ENCODE measurements at regions of chr6 and their contacts with region 1.

Region 1: DNA sequence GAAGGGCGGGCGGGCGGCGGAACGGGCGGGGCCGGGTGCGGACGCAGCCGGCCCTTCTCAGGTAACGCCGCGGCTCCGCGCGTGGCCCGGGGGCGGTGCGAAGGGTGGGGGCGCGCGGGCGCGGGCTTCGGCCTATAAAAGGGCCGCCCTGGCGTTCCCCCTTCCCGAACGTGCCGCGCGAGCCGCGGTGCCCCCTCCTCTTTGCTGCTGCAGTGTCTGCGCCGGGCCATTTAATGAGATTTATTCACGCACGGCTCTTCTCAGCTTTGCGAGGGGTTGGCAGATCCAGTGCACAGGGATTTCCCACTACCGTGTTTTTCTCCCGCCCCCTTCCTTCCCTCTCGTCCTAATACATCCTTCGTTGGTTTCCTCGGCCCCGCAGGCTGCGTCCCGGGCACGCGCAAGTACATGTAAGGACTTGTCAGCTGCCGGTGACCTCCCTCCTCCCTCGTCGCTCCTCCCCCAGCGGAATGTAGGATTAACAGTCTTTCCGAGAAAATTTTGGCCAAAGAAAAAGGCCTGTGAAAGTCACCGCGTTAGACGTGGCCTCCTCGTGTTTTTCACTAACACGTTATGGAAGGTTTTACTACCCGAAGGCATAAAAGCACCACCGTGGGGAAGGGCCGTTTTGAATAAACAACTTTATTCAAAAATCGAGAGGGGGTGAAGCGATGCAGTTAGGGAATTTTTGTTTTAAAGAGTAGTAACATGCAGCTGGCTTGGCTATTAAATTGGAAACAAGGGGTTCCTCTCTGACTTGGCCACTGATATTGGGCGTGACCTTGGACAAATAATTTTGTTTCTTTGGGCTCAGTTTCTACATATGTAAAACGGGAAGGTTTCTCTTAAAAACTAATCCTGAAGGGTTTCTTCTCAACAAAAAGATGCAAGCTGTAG is 966 bp upstream of the REV3L start:
- DNase-seq: peak in 6 of 9 donors; percentile 80 to 89 (median 86)
- ATAC-seq: peak; percentile 79
- H3K4me3 ChIP-seq: peak overlapping the region; percentile 93
- H3K4me3 Mint-ChIP-seq: peak overlapping the region; percentile 96 to 100 (median 98)
- H3K27ac ChIP-seq: peak overlapping the region; percentile 99
- H3K27ac Mint-ChIP-seq: peak overlapping the region; percentile 95 to 99 (median 99)
- H3K4me1 ChIP-seq: peaks cover 14 to 29% of the 10 kb centered on the region in 2 donors
- H3K4me1 Mint-ChIP-seq: peaks cover 28 to 59% (median 52%) of the 10 kb centered on the region in 7 donors
- H3K27me3 ChIP-seq: no peaks in the 10 kb centered on the region
- H3K27me3 Mint-ChIP-seq: peaks cover 0 to 3% (median 0%) of the 10 kb centered on the region in 5 donors

Region 2: DNA sequence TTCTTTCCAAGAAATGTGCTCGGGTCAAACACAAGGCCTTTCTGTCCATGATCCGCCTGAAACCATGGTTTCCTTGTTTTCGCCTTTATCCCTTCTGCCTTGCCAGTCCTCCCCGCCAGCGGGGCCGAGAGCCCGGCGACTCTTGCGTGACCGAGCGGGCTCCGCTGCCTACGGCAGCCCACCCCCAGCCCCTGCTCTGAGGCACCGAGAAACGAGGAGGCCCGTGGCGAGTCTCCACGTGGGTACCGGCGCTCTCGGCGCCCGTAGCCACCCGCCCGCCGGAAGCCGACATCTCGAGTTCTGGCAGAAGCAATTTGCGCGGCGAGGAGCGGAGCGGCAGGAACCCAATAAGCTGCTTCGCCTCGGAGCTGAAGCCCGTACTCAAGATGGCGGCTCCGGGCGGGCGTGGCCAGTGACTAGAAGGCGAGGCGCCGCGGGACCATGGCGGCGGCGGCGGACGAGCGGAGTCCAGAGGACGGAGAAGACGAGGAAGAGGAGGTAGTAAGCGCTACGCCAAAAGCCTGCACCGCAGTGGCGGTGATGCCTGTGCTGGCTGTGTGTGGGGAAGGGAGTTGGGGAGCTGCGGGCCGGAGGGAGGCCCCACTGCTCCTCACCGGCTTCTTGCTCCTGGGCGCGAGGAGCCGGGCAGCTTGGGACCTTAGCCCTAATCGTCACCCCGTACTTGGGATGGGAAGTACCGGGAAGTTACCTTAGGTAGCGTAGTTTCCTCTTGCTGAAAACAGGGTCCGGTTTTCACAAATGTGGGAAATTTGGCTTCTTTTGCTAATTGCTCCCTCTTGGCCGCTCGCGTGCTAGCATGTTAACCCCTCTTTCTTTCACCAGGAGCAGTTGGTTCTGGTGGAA is 525.4 kb before region 1 on chr6 and contains the start of gene GTF3C6:
- CTCF ChIA-PET with region 1: no interaction called
- POLR2A ChIA-PET with region 1: no interaction called
- intact Hi-C with region 1: loop called in 1 of 2 experiments (anchors 1 kb)
- DNase-seq: peak; percentile 85 to 94 (median 91)
- ATAC-seq: peak; percentile 99
- H3K4me3 ChIP-seq: peak within 1 kb of the TSS; percentile 86
- H3K4me3 Mint-ChIP-seq: peak within 1 kb of the TSS; percentile 95 to 99 (median 96)
- H3K27ac ChIP-seq: peak within 1 kb of the TSS; percentile 81
- H3K27ac Mint-ChIP-seq: peak within 1 kb of the TSS; percentile 96 to 99 (median 97)
- H3K4me1 ChIP-seq: peaks cover 4% of the 10 kb centered on the region in 2 donors
- H3K4me1 Mint-ChIP-seq: peaks cover 13 to 27% (median 20%) of the 10 kb centered on the region in 7 donors
- H3K27me3 ChIP-seq: no peaks in the 10 kb centered on the region
- H3K27me3 Mint-ChIP-seq: peaks cover 0 to 7% (median 0%) of the 10 kb centered on the region in 5 donors
- total RNA-seq, gene GTF3C6: 18.1 to 100 (median 29.9) TPM

Region 3: GRCh38 chr6:111533087-111533784 is 49.3 kb after region 1 on chr6:
- CTCF ChIA-PET with region 1: no interaction called
- POLR2A ChIA-PET with region 1: no interaction called
- intact Hi-C with region 1: loop called in 1 of 2 experiments (anchors 2 kb)
- DNase-seq: peak in 7 of 9 donors; percentile 28 to 65 (median 40)
- ATAC-seq: peak; percentile 48
- H3K4me3 ChIP-seq: no peak overlapping the region
- H3K4me3 Mint-ChIP-seq: peak overlapping the region in 1 of 10 donors; percentile 24
- H3K27ac ChIP-seq: no peak overlapping the region
- H3K27ac Mint-ChIP-seq: peak overlapping the region in 3 of 9 donors; percentile 6 to 37 (median 13)
- H3K4me1 ChIP-seq: peaks cover 3 to 6% of the 10 kb centered on the region in 2 donors
- H3K4me1 Mint-ChIP-seq: peaks cover 21 to 36% (median 26%) of the 10 kb centered on the region in 7 donors
- H3K27me3 ChIP-seq: no peaks in the 10 kb centered on the region
- H3K27me3 Mint-ChIP-seq: no peaks in the 10 kb centered on the region

Region 4: GRCh38 chr6:111750753-111751684 is 267.0 kb after region 1 on chr6:
- CTCF ChIA-PET with region 1: no interaction called
- POLR2A ChIA-PET with region 1: no interaction called
- intact Hi-C with region 1: loop called in 1 of 2 experiments (anchors 5 kb)
- DNase-seq: peak in 7 of 9 donors; percentile 72 to 85 (median 81)
- ATAC-seq: peak; percentile 94
- H3K4me3 ChIP-seq: peak overlapping the region; percentile 41
- H3K4me3 Mint-ChIP-seq: peak overlapping the region; percentile 58 to 82 (median 73)
- H3K27ac ChIP-seq: peak overlapping the region; percentile 97
- H3K27ac Mint-ChIP-seq: peak overlapping the region; percentile 93 to 100 (median 98)
- H3K4me1 ChIP-seq: peaks cover 94 to 95% of the 10 kb centered on the region in 2 donors
- H3K4me1 Mint-ChIP-seq: peaks cover 67 to 100% (median 99%) of the 10 kb centered on the region in 7 donors
- H3K27me3 ChIP-seq: no peaks in the 10 kb centered on the region
- H3K27me3 Mint-ChIP-seq: no peaks in the 10 kb centered on the region

Region 5: DNA sequence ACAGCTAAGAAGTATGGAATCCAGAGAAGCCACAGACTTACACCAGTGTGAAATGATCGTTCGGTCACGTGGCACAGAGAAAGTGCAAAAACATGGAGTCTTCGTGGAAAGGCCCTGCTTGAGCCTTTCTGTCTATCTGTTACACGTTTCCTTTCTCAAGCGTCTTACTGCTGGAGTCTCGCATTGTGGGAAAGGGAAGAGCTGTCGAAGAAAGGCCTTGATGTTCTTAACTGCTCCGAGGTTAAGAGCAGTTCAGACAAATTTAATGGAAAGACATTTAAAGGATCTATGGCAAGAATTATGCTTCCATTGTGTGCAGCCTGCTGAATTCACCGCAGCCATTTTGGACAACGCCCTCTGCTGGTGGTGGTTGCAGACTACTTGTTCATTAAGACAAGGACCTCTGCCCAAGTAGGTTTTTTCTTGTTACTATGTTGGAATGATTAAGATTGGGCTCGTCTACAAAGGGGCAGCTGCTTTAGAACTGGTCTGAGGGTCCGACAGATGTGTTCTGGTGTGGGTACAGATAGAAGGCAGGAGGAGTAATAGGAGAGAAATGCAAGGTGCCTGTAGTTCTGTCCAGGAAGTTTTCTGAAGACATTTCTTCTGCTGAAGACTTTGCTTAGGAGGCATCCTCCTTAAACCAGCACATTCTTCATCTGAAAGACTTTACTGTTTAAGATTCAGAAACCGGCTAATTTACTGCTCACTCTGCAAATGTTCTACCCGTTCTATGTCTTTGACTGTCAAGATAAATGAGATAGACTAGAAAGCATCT is 545.2 kb after region 1 on chr6:
- CTCF ChIA-PET with region 1: no interaction called
- POLR2A ChIA-PET with region 1: no interaction called
- intact Hi-C with region 1: loop called in 1 of 2 experiments (anchors 5 kb)
- DNase-seq: peak in 7 of 9 donors; percentile 22 to 58 (median 43)
- ATAC-seq: no peak
- H3K4me3 ChIP-seq: no peak overlapping the region
- H3K4me3 Mint-ChIP-seq: peak overlapping the region; percentile 49 to 83 (median 68)
- H3K27ac ChIP-seq: peak overlapping the region; percentile 90
- H3K27ac Mint-ChIP-seq: peak overlapping the region; percentile 95 to 100 (median 98)
- H3K4me1 ChIP-seq: peaks cover 34 to 74% of the 10 kb centered on the region in 2 donors
- H3K4me1 Mint-ChIP-seq: peaks cover 46 to 94% (median 84%) of the 10 kb centered on the region in 7 donors
- H3K27me3 ChIP-seq: no peaks in the 10 kb centered on the region
- H3K27me3 Mint-ChIP-seq: peaks cover 0 to 3% (median 0%) of the 10 kb centered on the region in 5 donors